ENCODE measurements at regions of chr1 and their contacts with region 1.

Region 1: DNA sequence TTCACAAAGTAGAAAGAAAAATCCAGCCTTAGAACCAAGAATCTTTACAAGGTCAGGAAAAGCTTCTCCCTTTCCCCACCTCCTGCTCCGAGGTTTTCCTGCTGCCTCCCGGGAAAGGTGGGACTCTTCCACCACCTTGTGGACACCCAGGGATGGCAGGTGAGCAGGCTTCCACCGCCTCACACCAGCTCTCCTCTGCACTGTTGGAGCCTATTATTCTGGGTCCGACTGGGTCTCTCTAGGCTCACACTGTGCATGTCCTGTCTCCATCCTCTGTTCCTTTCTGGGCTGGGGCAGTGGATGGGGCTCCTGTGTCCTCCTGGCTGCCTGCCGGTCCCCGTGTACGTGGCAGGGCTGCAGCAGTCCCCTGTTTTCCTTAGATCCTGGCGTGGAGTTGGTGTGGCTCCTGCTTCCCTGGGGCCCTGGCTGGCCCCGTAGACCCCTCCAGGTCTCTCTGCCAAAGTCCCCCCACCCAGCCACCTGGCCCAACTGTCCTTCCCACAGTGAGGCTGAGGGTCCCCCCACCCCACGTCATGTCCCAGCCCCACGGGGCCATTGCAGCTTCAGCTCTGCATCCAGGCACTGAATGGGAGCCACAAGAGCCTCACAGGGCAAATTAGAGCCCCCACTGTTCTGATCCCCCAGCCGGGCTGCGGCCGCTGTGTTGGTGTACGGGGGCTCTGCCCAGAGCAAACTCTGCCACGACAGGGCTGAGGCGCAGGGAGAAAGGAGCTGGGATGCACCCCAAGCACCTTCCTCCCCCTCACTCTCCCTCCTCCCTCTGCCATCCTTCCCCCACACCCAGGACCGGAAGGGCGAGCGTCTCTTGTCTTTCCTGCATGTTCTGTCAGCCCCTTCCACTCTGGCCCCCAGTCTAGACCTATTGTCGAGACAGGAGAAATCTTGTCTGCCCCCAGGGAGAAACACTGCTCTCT is 3.3 kb upstream of the SLC45A1 start:
- DNase-seq: peak; percentile 62
- H3K4me3 ChIP-seq: no peak overlapping the region
- H3K27ac ChIP-seq: no peak overlapping the region
- H3K4me1 ChIP-seq: peaks cover 19% of the 10 kb centered on the region
- H3K27me3 ChIP-seq: no peaks in the 10 kb centered on the region
- CTCF ChIP-seq: peak; percentile 95 to 97

Region 2: DNA sequence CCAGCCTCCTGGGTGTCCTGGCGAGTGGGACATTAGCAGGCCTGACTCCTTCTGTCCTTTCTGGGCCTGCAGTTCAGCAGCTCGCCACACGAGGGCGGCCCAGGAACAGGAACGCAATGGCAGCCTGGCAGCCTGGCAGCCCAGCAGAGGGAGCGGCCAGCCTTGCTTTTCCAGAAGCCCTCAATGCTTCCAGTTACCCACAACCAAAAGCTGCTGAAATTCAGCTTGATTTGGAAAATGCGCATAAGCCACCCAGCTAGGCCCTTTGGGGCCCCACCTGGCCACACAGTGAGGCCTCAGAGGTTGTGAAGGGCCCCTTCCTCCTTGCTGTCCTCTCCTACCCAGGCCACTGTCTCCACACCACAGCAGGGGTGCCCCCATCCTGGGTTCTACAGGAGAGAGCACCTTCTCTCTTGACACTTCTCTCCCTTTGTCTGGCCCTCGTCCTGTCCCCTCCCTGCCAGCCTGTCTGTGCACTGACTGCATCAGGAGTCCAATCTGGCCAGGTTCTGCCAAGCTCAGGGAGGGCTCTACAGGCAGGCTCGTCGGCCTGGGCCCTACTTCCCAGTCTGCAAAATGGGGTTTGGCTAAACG is 646.9 kb before region 1 on chr1:
- CTCF ChIA-PET with region 1: no interaction called
- dilution Hi-C with region 1: no loop called
- in situ Hi-C with region 1: no loop called
- intact Hi-C with region 1: loop called (anchors 1 kb)
- DNase-seq: peak; percentile 62
- H3K4me3 ChIP-seq: no peak overlapping the region
- H3K27ac ChIP-seq: no peak overlapping the region
- H3K4me1 ChIP-seq: peaks cover 4% of the 10 kb centered on the region
- H3K27me3 ChIP-seq: no peaks in the 10 kb centered on the region
- CTCF ChIP-seq: peak; percentile 99 to 100

Region 3: GRCh38 chr1:7983086-7983778 is 331.4 kb before region 1 on chr1:
- CTCF ChIA-PET with region 1: interaction called, 4 read pairs
- dilution Hi-C with region 1: loop called (anchors 5 kb)
- in situ Hi-C with region 1: loop called (anchors 5 to 10 kb)
- intact Hi-C with region 1: loop called (anchors 1 kb)
- DNase-seq: no peak
- H3K4me3 ChIP-seq: no peak overlapping the region
- H3K27ac ChIP-seq: no peak overlapping the region
- H3K4me1 ChIP-seq: peaks cover 3% of the 10 kb centered on the region
- H3K27me3 ChIP-seq: no peaks in the 10 kb centered on the region
- CTCF ChIP-seq: no peak

Region 4: GRCh38 chr1:8015036-8015808 is 299.4 kb before region 1 on chr1:
- CTCF ChIA-PET with region 1: interaction called, 19 read pairs
- dilution Hi-C with region 1: no loop called
- in situ Hi-C with region 1: loop called in 1 of 2 experiments (anchors 10 kb)
- intact Hi-C with region 1: loop called (anchors 1 kb)
- DNase-seq: peak; percentile 78
- H3K4me3 ChIP-seq: no peak overlapping the region
- H3K27ac ChIP-seq: peak overlapping the region; percentile 30
- H3K4me1 ChIP-seq: peaks cover 58% of the 10 kb centered on the region
- H3K27me3 ChIP-seq: no peaks in the 10 kb centered on the region
- CTCF ChIP-seq: peak; percentile 60 to 67

Region 5: DNA sequence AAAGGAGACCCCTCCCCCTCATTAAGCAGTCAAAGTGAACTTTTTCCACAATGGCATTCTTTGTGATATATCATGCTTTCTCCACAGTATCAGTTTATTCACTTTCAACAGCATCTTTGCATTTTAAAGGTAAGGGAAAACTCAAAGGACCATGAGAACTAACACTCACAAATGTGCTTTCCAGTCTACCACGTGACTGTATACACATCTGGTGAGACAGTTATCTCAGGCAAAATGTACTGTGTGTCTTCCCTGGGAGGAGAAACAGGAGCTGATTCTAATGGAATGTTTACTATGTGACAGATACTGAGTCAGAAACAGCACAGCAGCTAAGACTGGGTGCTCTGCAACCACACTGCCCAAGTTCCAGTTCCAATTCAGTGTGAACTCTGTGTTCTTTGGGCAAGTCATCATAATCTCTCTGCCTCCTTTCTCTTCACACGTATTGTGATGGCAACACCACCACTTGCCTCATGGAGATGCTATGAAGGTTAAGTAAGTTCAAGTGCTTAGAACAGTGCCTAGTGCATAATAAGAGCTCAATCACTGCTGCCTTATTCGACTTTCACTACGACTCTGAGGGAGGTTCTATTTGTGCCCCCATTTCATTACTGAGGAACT is 82.3 kb after region 1 on chr1:
- CTCF ChIA-PET with region 1: no interaction called
- dilution Hi-C with region 1: no loop called
- in situ Hi-C with region 1: no loop called
- intact Hi-C with region 1: no loop called
- DNase-seq: peak; percentile 98
- H3K4me3 ChIP-seq: no peak overlapping the region
- H3K27ac ChIP-seq: peak overlapping the region; percentile 79
- H3K4me1 ChIP-seq: peaks cover 26% of the 10 kb centered on the region
- H3K27me3 ChIP-seq: no peaks in the 10 kb centered on the region
- CTCF ChIP-seq: no peak

Region 6: DNA sequence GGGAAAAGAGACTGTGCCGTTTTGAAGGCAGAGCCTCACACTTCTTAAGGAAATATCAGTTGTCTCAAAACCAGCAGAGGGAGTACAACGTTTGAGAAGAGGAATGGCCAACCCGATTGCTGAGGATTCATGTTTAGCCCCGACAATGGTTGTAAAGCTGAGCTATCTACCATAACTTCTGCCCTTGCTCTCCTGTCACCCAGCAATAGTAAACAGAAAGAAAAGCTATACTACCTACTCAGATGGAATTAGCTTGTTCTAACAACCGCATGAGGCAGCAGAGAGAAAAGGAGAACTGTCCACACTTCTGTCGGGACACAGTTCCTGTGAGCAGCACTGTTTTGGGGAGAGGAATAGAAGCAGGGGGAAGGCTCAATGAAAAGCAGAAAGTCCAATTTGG is 94.5 kb after region 1 on chr1:
- CTCF ChIA-PET with region 1: no interaction called
- dilution Hi-C with region 1: loop called (anchors 5 kb)
- in situ Hi-C with region 1: no loop called
- intact Hi-C with region 1: no loop called
- DNase-seq: peak; percentile 53
- H3K4me3 ChIP-seq: no peak overlapping the region
- H3K27ac ChIP-seq: no peak overlapping the region
- H3K4me1 ChIP-seq: peaks cover 9% of the 10 kb centered on the region
- H3K27me3 ChIP-seq: no peaks in the 10 kb centered on the region
- CTCF ChIP-seq: peak; percentile 54